Posterior cingulate gyrus (tissue), 11 donors: ENCODE measurements at regions of chr5 and their contacts with region 1.

Region 1: GRCh38 chr5:69166686-69167492 is at the start of gene CCNB1:
- DNase-seq: peak; percentile 97 to 100 (median 99)

Region 2: GRCh38 chr5:69234457-69235268 is 67.8 kb after region 1 on chr5 and contains the start of gene CDK7:
- intact Hi-C with region 1: loop called (anchors 2 kb)
- DNase-seq: peak; percentile 88 to 99 (median 96)

Region 3: DNA sequence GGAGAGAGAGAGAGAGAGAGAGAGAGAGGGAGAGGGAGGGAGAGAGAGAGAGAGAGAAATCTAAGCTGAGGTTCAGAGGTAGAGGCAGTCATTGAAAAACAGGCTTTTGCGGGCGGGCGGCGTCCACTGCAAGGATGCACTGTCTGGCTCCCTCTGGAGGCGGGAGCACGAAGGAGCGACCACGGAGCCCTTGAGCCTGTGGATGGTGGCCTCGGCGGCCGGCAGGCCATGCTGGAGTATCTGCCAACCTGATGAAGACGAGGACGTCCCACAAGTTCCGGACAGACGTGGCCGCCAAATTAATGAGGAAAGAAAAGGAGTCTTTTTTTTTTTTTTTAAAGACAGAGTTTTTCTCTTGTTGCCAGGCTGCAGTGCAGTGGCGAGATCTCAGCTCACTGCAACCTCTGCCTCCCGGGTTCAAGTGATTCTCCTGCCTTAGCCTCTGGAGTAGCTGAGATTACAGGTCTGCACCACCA is 167.9 kb after region 1 on chr5:
- intact Hi-C with region 1: loop called (anchors 2 kb)
- DNase-seq: peak; percentile 69 to 97 (median 86)

Region 4: DNA sequence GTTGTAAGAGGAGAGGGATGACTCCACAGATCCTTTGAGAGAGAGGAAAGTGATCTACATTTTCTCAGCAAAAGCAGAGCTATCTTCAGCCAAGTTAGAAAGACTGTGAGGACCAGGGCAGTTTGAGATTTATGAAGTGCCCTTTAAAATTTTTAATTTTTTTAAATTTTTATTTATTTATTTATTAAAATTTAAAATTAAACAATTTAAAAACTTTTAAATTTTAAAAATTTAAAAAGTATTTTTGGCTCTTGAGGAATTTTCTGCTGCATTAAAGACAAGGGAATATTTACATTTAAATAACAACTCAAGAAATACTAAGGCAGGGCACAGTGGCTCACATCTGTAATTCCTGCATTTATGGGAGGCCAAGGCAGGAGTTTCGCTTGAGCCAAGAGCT is 295.3 kb after region 1 on chr5:
- intact Hi-C with region 1: no loop called
- DNase-seq: no peak